A673 (cell line): ENCODE measurements at regions of chr10 and their contacts with region 1.

Region 1: DNA sequence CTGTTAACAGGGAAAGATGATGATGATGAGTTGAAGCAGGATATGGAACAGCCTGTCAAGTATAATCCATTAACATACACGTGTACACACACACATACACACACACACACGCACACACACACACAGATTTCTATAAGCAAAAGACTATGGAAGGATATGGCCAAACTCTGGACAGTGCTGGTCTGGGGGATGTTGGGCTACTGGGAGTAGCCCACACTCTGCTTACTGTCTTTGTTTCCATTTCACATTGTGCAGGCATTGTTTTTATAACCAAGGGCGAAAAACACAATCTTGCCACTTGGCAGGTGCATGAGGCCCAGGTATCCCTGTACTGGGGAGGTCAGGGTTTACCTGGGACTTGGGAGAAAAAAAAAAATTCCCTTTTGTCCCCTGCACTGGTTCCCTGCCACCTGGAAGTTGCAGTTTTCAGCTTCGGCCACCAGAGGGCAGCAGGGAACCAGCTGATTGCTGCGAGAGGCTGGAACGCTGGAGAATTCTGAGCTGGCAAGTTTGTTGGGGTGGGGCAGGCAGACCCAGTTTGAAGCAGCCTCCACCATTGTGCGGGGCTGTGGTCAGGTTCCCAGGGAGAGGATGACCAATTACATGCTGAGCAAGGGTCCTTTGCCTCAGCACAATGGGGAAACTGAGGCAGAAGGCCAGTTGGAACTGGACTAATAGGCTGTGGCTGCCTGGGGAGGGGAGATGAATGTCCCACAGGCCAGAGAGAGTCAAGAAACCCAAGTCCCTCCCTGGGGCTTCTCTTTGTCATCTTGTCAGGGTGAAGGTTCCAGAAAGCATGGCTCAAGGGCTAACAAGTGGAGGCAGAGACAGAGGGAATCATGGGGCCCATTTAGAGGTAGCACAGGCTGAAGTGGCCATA is 27.3 kb downstream of the PPIF start:
- DNase-seq: peak; percentile 76
- H3K4me3 ChIP-seq: no peak overlapping the region
- H3K27ac ChIP-seq: no peak overlapping the region
- H3K4me1 ChIP-seq: no peaks in the 10 kb centered on the region
- H3K27me3 ChIP-seq: no peaks in the 10 kb centered on the region
- CTCF ChIP-seq: peak; percentile 91

Region 2: DNA sequence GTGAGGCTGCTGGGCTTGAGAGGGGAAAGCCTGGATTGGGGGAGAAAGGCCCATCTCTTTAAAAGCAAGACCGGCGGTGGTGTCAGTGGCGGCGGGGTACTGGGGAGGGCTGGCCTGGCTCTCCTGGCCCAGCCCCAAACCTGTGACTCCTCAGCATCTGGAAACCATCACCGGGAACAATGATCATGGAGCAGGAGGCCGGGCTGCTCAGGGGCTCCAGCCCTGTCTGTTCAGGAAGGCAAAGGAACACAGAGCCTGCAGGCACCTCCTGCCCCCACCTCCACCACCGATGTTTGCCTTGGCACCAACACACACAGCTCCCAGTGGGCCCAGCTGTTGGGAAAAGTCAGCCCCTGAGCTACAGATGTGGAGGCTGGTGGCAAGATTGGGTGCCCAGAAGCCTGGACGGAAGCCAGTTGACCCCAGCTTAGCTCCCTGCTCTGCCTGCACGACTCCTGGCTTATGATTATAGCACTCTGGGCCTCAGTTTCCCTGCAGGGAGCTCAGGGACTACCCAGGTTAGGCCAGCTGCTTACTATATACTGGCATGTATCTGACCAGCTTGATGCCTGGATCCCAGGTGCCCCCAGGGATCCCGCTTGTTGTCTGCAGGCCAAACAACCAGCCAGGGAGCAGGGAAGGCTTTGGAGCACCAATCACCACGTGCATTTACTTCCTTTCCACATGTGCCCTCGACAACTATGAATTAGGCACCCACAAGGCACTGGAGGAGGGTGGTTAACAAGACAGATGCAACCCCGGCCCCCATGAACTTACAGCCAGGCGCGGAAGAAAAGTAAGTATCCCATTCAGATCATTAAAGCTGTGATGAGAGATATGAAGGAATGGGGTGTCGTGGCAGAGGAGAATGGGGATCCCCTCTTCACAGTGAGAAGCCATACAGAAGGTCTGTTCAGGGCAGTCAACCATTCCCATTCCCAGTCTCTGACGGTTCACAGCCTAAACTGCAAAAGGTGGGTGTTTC is 33.6 kb after region 1 on chr10:
- CTCF ChIA-PET with region 1: no interaction called
- POLR2A ChIA-PET with region 1: no interaction called
- intact Hi-C with region 1: no loop called
- DNase-seq: no peak
- H3K4me3 ChIP-seq: no peak overlapping the region
- H3K27ac ChIP-seq: peak overlapping the region; percentile 30
- H3K4me1 ChIP-seq: peaks cover 32% of the 10 kb centered on the region
- H3K27me3 ChIP-seq: no peaks in the 10 kb centered on the region
- CTCF ChIP-seq: no peak

Region 3: GRCh38 chr10:79487296-79488194 is 113.0 kb after region 1 on chr10:
- CTCF ChIA-PET with region 1: interaction called, 13 read pairs
- POLR2A ChIA-PET with region 1: no interaction called
- intact Hi-C with region 1: loop called (anchors 5 kb)
- DNase-seq: peak; percentile 62
- H3K4me3 ChIP-seq: no peak overlapping the region
- H3K27ac ChIP-seq: no peak overlapping the region
- H3K4me1 ChIP-seq: peaks cover 4% of the 10 kb centered on the region
- H3K27me3 ChIP-seq: no peaks in the 10 kb centered on the region
- CTCF ChIP-seq: peak; percentile 70

Region 4: DNA sequence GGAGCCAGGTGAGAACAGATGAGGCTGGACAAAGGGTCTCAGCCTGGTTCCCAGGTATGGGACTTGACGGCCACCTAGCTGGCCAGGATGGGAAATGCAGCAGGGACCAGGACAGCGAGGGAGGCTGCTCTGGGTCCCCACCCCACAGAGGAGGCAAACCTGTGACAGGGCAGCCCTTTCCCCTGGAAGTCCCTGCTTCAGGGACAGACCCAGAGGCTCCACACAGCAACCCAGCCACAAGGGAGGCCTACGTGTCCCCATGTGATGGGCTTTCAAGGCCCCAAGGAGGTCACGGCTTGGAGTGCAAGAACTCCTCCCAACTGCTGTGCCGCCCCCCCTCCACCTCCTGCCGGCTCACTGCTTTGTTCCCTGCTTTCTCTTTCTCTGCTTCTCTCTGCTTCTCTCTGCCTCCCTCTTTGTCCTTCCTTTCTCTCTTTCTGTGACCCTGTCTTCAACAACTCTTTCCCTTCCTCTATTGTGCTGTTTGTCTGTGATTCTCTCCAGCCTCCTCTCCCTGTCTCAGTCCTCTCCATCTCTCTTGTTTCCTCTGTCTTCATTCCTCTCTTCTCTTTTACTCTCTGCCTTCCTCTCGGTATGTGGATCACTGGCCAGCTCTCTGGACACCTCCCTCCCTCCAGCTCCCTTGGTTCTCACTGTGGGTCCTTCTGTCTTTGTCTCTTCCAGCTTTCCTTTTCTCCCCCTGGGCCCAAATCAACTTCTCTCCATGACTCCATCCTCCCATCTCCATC is 128.2 kb after region 1 on chr10:
- CTCF ChIA-PET with region 1: interaction called, 9 read pairs
- POLR2A ChIA-PET with region 1: no interaction called
- intact Hi-C with region 1: loop called (anchors 5 kb)
- DNase-seq: no peak
- H3K4me3 ChIP-seq: no peak overlapping the region
- H3K27ac ChIP-seq: no peak overlapping the region
- H3K4me1 ChIP-seq: no peaks in the 10 kb centered on the region
- H3K27me3 ChIP-seq: peaks cover 3% of the 10 kb centered on the region
- CTCF ChIP-seq: peak; percentile 35; the same call in 1 of the 2 replicates

Region 5: GRCh38 chr10:79608505-79609375 is 234.2 kb after region 1 on chr10:
- CTCF ChIA-PET with region 1: no interaction called
- POLR2A ChIA-PET with region 1: no interaction called
- intact Hi-C with region 1: loop called (anchors 10 kb)
- DNase-seq: peak; percentile 39
- H3K4me3 ChIP-seq: no peak overlapping the region
- H3K27ac ChIP-seq: no peak overlapping the region
- H3K4me1 ChIP-seq: no peaks in the 10 kb centered on the region
- H3K27me3 ChIP-seq: no peaks in the 10 kb centered on the region
- CTCF ChIP-seq: peak; percentile 68

Region 6: DNA sequence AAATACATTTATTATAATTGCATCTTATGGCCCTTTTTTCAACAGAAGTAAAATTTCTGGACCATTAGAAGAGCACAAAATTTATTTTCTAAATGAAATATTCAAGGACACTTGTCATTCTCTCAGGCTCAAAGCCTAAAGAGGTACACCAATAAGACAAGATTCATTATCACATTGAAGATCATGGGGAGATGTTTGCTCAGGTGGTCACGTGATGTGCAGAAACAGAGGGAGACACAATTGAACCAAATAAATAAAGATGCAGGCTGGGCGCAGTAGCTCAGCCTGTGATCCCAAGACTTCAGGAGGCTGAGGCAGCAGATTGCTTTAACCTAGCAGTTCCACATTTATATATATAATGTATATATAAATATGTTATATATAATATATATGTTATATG is 650.7 kb after region 1 on chr10:
- CTCF ChIA-PET with region 1: no interaction called
- POLR2A ChIA-PET with region 1: no interaction called
- intact Hi-C with region 1: no loop called
- DNase-seq: no peak
- H3K4me3 ChIP-seq: no peak overlapping the region
- H3K27ac ChIP-seq: no peak overlapping the region
- H3K4me1 ChIP-seq: no peaks in the 10 kb centered on the region
- H3K27me3 ChIP-seq: no peaks in the 10 kb centered on the region
- CTCF ChIP-seq: no peak